GM12878 (cell line): ENCODE measurements at regions of chr17 and their contacts with region 1.

Region 1: DNA sequence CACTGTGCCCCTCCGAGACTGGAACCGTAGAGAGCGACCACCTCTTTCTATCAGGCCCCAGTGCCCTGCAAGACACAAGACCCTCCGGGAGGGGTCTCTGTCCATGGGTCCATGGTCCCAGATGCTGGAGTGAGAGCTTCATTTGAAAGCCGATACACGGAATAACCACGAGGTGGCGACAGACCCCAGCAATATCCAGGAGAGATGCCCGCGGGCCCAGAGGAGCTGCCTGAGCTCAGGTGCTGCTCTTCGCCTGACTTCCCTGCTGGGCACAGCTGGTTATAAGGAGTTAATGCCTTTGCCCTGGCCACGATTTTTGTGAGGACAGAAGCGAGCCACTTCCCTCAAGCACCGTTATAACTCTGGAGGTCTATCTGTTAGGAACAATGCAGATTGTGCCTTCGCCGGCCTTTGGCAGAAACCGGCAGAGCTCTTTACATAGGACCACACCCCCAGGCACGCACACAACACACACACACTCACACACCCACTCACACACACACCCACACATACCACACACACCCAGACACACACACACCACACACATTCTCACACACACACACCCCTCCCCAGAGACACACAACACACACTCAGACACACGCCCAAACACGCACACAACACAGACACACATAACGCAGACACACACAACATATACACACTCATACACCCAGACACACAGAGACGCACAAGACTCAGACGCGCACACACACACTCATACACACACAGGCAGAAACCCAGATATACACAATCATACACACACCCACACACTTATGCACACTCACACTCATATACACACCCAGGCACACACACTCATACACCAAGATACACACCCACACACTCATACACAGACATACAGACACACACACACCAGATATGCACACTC is 436.4 kb downstream of the SOX9 start:
- DNase-seq: no peak
- ATAC-seq: peak; percentile 78
- H3K4me3 ChIP-seq: no peak overlapping the region
- H3K27ac ChIP-seq: no peak overlapping the region
- H3K4me1 ChIP-seq: no peaks in the 10 kb centered on the region
- H3K27me3 ChIP-seq: no peaks in the 10 kb centered on the region
- CTCF ChIP-seq: peak; percentile 82 to 85 (median 83)
- EP300 ChIP-seq: no peak
- POLR2A ChIP-seq: no peak
- RAD21 ChIP-seq: peak; percentile 79

Region 2: GRCh38 chr17:71480099-71480498 is 1077.1 kb before region 1 on chr17:
- CTCF ChIA-PET with region 1: no interaction called
- POLR2A ChIA-PET with region 1: no interaction called
- RAD21 ChIA-PET with region 1: no interaction called
- SMC1A ChIA-PET with region 1: no interaction called
- in situ Hi-C with region 1: no loop called
- intact Hi-C with region 1: no loop called
- DNase-seq: no peak
- ATAC-seq: no peak
- H3K4me3 ChIP-seq: no peak overlapping the region
- H3K27ac ChIP-seq: no peak overlapping the region
- H3K4me1 ChIP-seq: no peaks in the 10 kb centered on the region
- H3K27me3 ChIP-seq: no peaks in the 10 kb centered on the region
- CTCF ChIP-seq: no peak
- EP300 ChIP-seq: no peak
- POLR2A ChIP-seq: no peak
- RAD21 ChIP-seq: no peak

Region 3: GRCh38 chr17:72569148-72569946 is 12.2 kb after region 1 on chr17:
- CTCF ChIA-PET with region 1: interaction called, 10 read pairs
- POLR2A ChIA-PET with region 1: no interaction called
- RAD21 ChIA-PET with region 1: interaction called, 3 read pairs
- SMC1A ChIA-PET with region 1: no interaction called
- in situ Hi-C with region 1: no loop called
- intact Hi-C with region 1: no loop called
- DNase-seq: no peak
- ATAC-seq: peak; percentile 12; the same call in 1 of the 3 replicates
- H3K4me3 ChIP-seq: no peak overlapping the region
- H3K27ac ChIP-seq: no peak overlapping the region
- H3K4me1 ChIP-seq: no peaks in the 10 kb centered on the region
- H3K27me3 ChIP-seq: no peaks in the 10 kb centered on the region; a peak in 1 of 4 replicates
- CTCF ChIP-seq: no peak
- EP300 ChIP-seq: no peak
- POLR2A ChIP-seq: no peak
- RAD21 ChIP-seq: no peak

Region 4: DNA sequence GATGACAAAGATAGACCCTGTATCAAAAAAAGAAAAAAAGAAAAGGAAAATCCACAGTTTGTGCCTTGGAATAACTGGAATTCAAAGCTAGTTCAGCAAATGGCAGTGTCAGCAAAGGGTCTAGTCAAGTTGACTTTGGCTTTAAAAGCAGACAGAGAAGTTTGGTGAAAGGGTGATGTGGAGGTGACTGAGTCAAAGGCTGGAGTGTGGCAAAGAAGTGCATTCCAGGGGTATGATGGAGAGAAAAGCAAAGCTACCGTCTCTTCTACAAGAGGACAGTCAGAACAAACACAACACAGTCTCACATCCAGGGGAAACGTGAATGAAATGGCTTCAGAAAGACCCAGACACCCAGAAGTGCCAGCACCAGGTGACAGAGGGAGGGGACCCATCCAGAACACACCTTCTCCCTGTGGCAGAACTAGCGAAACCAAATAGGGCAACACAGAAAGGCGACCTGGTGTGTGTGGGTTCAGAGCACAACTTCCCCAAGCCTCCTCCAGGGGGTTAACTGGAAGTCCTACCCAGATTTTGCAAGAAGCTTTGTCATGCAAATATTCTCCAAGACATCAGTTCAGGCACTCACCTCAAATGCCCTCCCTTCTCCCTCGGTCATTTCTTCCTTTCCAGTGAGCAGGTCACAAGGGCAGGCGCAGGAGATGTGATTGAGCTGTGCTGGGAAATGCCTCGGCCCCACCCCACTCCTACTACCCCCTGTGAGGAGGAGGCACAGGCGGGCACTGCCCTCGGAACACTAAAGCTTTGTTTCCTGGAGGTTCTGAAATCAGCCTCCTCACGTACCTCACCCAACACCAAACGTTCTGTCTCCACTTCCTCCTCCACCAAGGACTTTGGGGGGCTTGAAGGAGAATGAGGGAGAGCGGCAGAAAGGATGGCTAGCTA is 45.6 kb after region 1 on chr17:
- CTCF ChIA-PET with region 1: interaction called, 9 read pairs
- POLR2A ChIA-PET with region 1: interaction called, 3 read pairs
- RAD21 ChIA-PET with region 1: interaction called, 19 read pairs
- SMC1A ChIA-PET with region 1: interaction called, 23 read pairs
- in situ Hi-C with region 1: no loop called
- intact Hi-C with region 1: no loop called
- DNase-seq: no peak
- ATAC-seq: peak; percentile 62
- H3K4me3 ChIP-seq: no peak overlapping the region
- H3K27ac ChIP-seq: peak overlapping the region; percentile 31
- H3K4me1 ChIP-seq: peaks cover 6% of the 10 kb centered on the region
- H3K27me3 ChIP-seq: no peaks in the 10 kb centered on the region
- CTCF ChIP-seq: 0 out of 6 replicates have a peak, but pooled peaks of 2 of the 3 experiments have one; percentile 4 to 17
- EP300 ChIP-seq: no peak
- POLR2A ChIP-seq: no peak
- RAD21 ChIP-seq: no peak

Region 5: DNA sequence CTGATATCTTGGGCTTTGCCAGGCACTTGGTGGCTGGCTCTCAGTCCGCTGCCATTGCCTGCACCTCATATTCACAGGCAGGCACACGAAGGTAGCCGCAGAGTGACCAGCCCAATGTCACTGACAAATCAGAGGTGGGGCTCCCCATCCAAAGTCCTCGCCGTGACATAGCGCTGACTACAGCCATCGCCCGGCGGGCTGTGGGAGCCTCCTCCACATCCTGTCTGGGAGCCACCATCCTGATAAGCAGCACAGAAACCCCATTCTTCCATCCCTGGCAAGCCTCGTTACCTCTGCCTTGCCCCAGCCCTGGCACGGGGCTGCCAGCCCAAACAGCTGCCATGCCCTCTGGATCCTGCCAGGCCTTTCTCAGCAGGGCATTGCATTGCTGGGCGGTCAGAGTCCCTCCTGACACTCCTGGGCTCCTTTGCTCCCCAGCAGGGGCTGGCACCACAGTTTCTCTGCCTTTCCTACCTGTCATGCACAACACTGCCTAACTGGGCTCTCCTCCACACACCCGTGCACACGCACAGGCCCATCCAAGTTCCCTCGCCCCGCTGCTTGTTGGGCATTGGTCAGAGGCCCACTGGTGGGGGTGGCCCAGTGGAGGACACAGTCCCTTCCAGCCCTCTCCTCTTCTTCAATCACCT is 97.6 kb after region 1 on chr17:
- CTCF ChIA-PET with region 1: interaction called, 65 read pairs
- POLR2A ChIA-PET with region 1: no interaction called
- RAD21 ChIA-PET with region 1: interaction called, 13 read pairs
- SMC1A ChIA-PET with region 1: interaction called, 15 read pairs
- in situ Hi-C with region 1: no loop called
- intact Hi-C with region 1: loop called (anchors 1 kb)
- DNase-seq: no peak
- ATAC-seq: no peak
- H3K4me3 ChIP-seq: no peak overlapping the region
- H3K27ac ChIP-seq: no peak overlapping the region
- H3K4me1 ChIP-seq: peaks cover 4% of the 10 kb centered on the region; the same call in 1 of the 2 replicates
- H3K27me3 ChIP-seq: no peaks in the 10 kb centered on the region
- CTCF ChIP-seq: no peak
- EP300 ChIP-seq: no peak
- POLR2A ChIP-seq: no peak
- RAD21 ChIP-seq: no peak

Region 6: DNA sequence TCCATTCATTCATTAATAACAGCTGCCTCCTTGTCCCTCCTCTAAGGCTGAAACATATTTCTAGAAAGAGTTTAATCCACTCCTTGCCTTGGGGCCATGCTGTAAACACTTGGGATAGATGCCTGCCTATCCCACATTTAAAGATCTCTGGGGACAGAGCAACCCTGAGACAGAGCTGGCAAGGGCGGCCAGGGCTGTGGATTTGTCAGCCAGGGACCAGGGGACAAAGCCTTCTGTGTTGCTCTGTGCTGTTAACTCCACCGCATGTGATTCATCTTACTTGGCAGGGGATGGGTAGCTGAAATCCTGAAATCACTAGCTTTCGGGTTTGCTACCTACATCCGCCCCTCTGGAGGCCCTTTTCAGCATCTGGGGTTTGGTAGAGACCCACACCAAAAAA is 142.4 kb after region 1 on chr17:
- CTCF ChIA-PET with region 1: interaction called, 13 read pairs
- POLR2A ChIA-PET with region 1: no interaction called
- RAD21 ChIA-PET with region 1: interaction called, 3 read pairs
- SMC1A ChIA-PET with region 1: interaction called, 4 read pairs
- in situ Hi-C with region 1: no loop called
- intact Hi-C with region 1: no loop called
- DNase-seq: no peak
- ATAC-seq: no peak
- H3K4me3 ChIP-seq: no peak overlapping the region
- H3K27ac ChIP-seq: no peak overlapping the region
- H3K4me1 ChIP-seq: no peaks in the 10 kb centered on the region
- H3K27me3 ChIP-seq: no peaks in the 10 kb centered on the region
- CTCF ChIP-seq: no peak
- EP300 ChIP-seq: no peak
- POLR2A ChIP-seq: no peak
- RAD21 ChIP-seq: no peak

Region 7: DNA sequence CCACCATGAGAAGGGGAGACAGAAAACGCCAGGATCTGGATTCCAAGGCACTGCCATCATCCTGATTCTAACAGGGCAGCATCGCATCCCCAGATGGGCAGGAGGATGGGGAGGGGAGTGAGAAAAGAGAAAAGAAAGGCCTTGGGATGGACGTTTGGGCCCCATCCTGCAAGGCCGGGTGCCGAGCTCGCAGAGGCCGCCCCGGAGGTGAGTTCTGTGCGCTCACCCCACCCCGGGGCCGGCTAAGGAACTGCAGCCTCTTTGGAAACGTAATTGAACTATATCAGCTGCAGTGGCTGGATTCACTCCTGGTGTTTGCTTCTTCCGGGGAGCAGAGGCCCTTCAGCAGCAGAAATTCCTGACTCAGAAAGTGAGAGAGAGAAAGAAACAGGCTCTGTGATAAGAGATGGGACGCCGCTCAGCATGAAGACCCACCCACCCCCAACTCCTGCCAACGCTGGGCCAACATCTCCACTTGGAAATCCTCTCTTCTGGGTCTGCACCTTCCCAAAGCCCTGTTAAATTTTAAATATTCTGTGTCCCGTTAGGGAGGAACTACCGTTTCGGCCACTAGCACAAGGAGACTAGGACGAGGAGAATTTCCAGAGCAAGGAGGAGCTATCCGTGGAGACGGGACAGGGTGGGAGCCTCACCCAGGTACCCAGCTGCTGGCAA is 599.1 kb after region 1 on chr17:
- CTCF ChIA-PET with region 1: interaction called, 16 read pairs
- POLR2A ChIA-PET with region 1: no interaction called
- RAD21 ChIA-PET with region 1: interaction called, 12 read pairs
- SMC1A ChIA-PET with region 1: interaction called, 3 read pairs
- in situ Hi-C with region 1: loop called (anchors 10 kb)
- intact Hi-C with region 1: loop called (anchors 1 kb)
- DNase-seq: no peak
- ATAC-seq: peak; percentile 91
- H3K4me3 ChIP-seq: peak overlapping the region; percentile 39; the same call in 1 of the 2 replicates
- H3K27ac ChIP-seq: peak overlapping the region; percentile 80
- H3K4me1 ChIP-seq: peaks cover 40% of the 10 kb centered on the region
- H3K27me3 ChIP-seq: no peaks in the 10 kb centered on the region
- CTCF ChIP-seq: peak; percentile 87 to 88 (median 87)
- EP300 ChIP-seq: no peak
- POLR2A ChIP-seq: no peak
- RAD21 ChIP-seq: peak; percentile 73